Breast epithelium (tissue), 4 donors: ENCODE measurements at regions of chr9 and their contacts with region 1.

Region 1: DNA sequence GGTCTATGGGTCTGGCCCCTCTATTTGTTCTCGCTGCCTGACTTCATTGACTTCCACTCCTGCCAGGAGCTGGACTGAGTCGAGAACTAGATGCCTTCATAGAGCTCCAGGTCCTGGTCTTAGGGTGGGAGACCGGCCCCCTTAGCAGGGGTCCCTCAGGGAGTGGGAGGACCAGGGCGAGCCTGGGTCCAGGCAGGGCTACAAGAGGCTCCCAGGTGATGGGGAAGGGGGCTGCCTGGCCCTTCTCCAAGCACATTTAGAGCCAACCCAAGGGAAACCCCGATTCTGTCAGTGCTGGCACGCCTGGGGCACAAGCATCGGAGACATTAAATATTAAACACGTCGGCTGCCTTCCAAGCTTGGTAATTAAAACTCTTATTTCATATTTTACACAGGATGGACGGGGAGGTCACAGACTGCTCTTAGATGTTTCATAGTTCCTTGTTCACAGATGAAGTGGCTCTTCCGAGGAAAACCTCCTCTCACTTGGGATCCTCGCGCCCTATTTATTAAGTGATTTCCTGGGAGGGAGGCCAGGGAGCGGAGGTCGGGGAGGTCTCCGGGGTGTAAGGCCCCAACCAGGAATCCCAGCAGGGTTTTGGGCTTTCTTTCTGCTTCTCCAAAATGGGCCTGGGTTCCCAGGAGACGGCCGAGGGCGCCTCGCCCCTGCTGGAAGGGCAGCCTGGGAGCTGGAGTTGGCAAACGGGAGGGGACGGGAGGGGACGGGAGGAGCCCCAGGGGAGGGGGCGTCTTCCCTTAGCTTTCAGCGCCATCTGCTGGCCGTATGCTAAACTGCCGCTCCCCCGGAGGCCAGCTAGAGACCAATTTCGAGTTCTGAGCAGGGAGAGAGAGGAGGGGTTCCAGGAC is 23.4 kb upstream of the ZBTB43 start:
- DNase-seq: peak; percentile 71 to 88
- H3K4me3 ChIP-seq: peak overlapping the region in 2 of 3 donors; percentile 43 to 64
- H3K27ac ChIP-seq: peak overlapping the region; percentile 3 to 45
- H3K4me1 ChIP-seq: no peaks in the 10 kb centered on the region
- H3K27me3 ChIP-seq: no peaks in the 10 kb centered on the region
- CTCF ChIP-seq: peak; percentile 60 to 95 (median 80)
- POLR2A ChIP-seq: no peak

Region 2: GRCh38 chr9:126704873-126705766 is 76.3 kb before region 1 on chr9:
- intact Hi-C with region 1: loop called (anchors 10 kb)
- DNase-seq: peak; percentile 70 to 83
- H3K4me3 ChIP-seq: peak overlapping the region in 2 of 3 donors; percentile 33 to 61
- H3K27ac ChIP-seq: peak overlapping the region in 1 of 2 donors; percentile 32
- H3K4me1 ChIP-seq: peaks cover 4 to 12% of the 10 kb centered on the region in 2 donors
- H3K27me3 ChIP-seq: peaks cover 0 to 9% of the 10 kb centered on the region in 2 donors
- CTCF ChIP-seq: peak; percentile 88 to 94 (median 90)
- POLR2A ChIP-seq: no peak

Region 3: DNA sequence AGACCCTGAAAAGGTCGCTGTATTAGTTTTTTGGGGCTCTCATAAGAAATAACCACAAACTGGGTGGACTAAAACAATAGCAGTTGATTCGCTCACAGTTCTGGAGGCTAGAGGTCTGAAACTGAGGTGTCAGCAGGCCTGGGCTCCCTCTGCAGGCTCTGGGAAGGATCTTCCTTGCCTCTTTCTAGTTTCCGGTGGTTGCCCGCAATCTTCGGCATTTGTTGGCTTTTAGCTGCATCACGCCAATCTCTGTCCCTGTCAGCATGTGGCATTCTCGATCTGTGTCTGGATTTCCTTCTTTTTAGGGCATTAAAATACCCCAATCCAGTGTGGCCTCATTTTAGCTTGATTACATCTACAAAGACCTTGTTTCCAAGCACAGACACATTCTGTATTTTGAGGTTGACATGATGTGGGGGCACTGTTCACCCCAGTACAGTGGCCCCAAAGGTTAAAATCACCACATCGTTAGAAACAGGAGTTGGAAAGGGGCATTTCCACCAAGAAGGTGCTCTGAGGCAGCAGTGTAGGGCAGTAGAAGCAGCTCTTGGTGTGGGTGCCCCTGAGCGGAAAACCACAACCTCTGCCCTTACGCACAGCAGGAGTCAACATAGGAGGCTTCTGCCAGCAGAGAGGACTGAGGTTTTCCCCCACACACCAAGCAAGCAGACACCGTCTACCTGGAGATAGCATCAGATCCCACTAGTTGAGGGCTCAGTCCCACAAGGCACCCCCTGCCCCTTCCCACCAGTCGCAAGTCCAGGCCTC is 656.3 kb after region 1 on chr9:
- intact Hi-C with region 1: no loop called
- DNase-seq: no peak
- H3K4me3 ChIP-seq: no peak overlapping the region
- H3K27ac ChIP-seq: no peak overlapping the region
- H3K4me1 ChIP-seq: no peaks in the 10 kb centered on the region
- H3K27me3 ChIP-seq: no peaks in the 10 kb centered on the region
- CTCF ChIP-seq: no peak
- POLR2A ChIP-seq: no peak